PC-3 (cell line): ENCODE measurements at regions of chr5 and their contacts with region 1.

Region 1: GRCh38 chr5:89729623-89730301 is 679.8 kb downstream of the CETN3 start:
- DNase-seq: peak; percentile 73
- ATAC-seq: peak; percentile 88
- H3K4me3 ChIP-seq: no peak overlapping the region
- H3K27ac ChIP-seq: no peak overlapping the region
- H3K4me1 ChIP-seq: 0 out of 2 replicates have a peak, but pooled peaks cover 4% of the 10 kb centered on the region
- H3K27me3 ChIP-seq: no peaks in the 10 kb centered on the region
- CTCF ChIP-seq: peak; percentile 80

Region 2: GRCh38 chr5:89556215-89557009 is 173.3 kb before region 1 on chr5:
- CTCF ChIA-PET with region 1: no interaction called
- POLR2A ChIA-PET with region 1: no interaction called
- intact Hi-C with region 1: loop called (anchors 10 kb)
- DNase-seq: peak; percentile 96
- ATAC-seq: peak; percentile 98
- H3K4me3 ChIP-seq: peak overlapping the region; percentile 6; the same call in 1 of the 2 replicates
- H3K27ac ChIP-seq: peak overlapping the region; percentile 86
- H3K4me1 ChIP-seq: peaks cover 20% of the 10 kb centered on the region
- H3K27me3 ChIP-seq: no peaks in the 10 kb centered on the region
- CTCF ChIP-seq: no peak

Region 3: GRCh38 chr5:89756955-89757354 is 27.2 kb after region 1 on chr5:
- CTCF ChIA-PET with region 1: no interaction called
- POLR2A ChIA-PET with region 1: no interaction called
- intact Hi-C with region 1: no loop called
- DNase-seq: no peak
- ATAC-seq: no peak
- H3K4me3 ChIP-seq: no peak overlapping the region
- H3K27ac ChIP-seq: no peak overlapping the region
- H3K4me1 ChIP-seq: peaks cover 14% of the 10 kb centered on the region
- H3K27me3 ChIP-seq: no peaks in the 10 kb centered on the region
- CTCF ChIP-seq: no peak